ENCODE measurements at regions of chr10 and their contacts with region 1.

Region 1: GRCh38 chr10:84537447-84537931 is 209.1 kb downstream of the CCSER2 start:
- DNase-seq: peak in 3 of 5 donors; percentile 6 to 50 (median 45)
- H3K4me3 ChIP-seq: no peak overlapping the region
- H3K4me3 Mint-ChIP-seq: peak overlapping the region in 1 of 7 donors; percentile 64
- H3K27ac ChIP-seq: no peak overlapping the region
- H3K27ac Mint-ChIP-seq: no peak overlapping the region
- H3K4me1 ChIP-seq: no peaks in the 10 kb centered on the region
- H3K4me1 Mint-ChIP-seq: peaks cover 10 to 15% (median 12%) of the 10 kb centered on the region in 3 donors
- H3K27me3 ChIP-seq: no peaks in the 10 kb centered on the region
- H3K27me3 Mint-ChIP-seq: peaks cover 19 to 33% of the 10 kb centered on the region in 2 donors

Region 2: GRCh38 chr10:83965473-83965872 is 572.0 kb before region 1 on chr10:
- CTCF ChIA-PET with region 1: no interaction called
- POLR2A ChIA-PET with region 1: no interaction called
- DNase-seq: no peak
- H3K4me3 ChIP-seq: no peak overlapping the region
- H3K4me3 Mint-ChIP-seq: no peak overlapping the region
- H3K27ac ChIP-seq: no peak overlapping the region
- H3K27ac Mint-ChIP-seq: no peak overlapping the region
- H3K4me1 ChIP-seq: no peaks in the 10 kb centered on the region
- H3K4me1 Mint-ChIP-seq: no peaks in the 10 kb centered on the region
- H3K27me3 ChIP-seq: no peaks in the 10 kb centered on the region
- H3K27me3 Mint-ChIP-seq: peaks cover 1 to 3% of the 10 kb centered on the region in 2 donors

Region 3: DNA sequence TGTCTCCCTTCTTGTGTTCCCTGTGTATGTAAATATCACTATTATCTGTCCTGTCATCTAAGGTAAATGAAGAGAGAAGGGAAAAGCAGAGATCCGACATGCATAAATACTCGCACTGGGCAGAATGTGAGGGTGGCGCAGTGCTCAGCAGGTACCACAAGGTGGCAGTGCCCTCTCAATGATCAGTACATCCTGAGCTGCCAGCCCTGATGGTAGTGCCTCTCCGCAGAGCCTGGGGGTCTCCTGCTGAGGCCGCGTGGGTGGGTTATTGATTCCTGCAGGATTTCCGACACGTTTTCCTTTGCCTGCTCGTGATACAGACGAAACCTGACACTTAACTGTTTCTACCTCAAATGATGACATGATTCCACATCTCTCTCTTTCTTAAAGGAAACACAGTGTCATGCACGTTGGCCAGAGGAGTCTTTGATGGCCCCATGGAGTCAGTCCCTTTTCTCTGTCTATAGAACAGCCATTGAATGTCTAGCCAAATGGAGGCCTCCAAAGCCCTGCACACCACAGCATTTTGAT is 272.8 kb before region 1 on chr10:
- CTCF ChIA-PET with region 1: interaction called, 191 read pairs
- POLR2A ChIA-PET with region 1: no interaction called
- DNase-seq: peak; percentile 48 to 76 (median 58)
- H3K4me3 ChIP-seq: no peak overlapping the region
- H3K4me3 Mint-ChIP-seq: no peak overlapping the region
- H3K27ac ChIP-seq: no peak overlapping the region
- H3K27ac Mint-ChIP-seq: no peak overlapping the region
- H3K4me1 ChIP-seq: no peaks in the 10 kb centered on the region
- H3K4me1 Mint-ChIP-seq: peaks cover 5 to 13% (median 9%) of the 10 kb centered on the region in 3 donors
- H3K27me3 ChIP-seq: peaks cover 5% of the 10 kb centered on the region
- H3K27me3 Mint-ChIP-seq: peaks cover 9 to 39% of the 10 kb centered on the region in 2 donors

Region 4: GRCh38 chr10:84352251-84352842 is 185.1 kb before region 1 on chr10:
- CTCF ChIA-PET with region 1: interaction called, 24 read pairs
- POLR2A ChIA-PET with region 1: no interaction called
- DNase-seq: peak; percentile 52 to 83 (median 59)
- H3K4me3 ChIP-seq: no peak overlapping the region
- H3K4me3 Mint-ChIP-seq: peak overlapping the region in 3 of 7 donors; percentile 7 to 37 (median 14)
- H3K27ac ChIP-seq: no peak overlapping the region
- H3K27ac Mint-ChIP-seq: peak overlapping the region in 6 of 8 donors; percentile 22 to 75 (median 46)
- H3K4me1 ChIP-seq: peaks cover 53% of the 10 kb centered on the region
- H3K4me1 Mint-ChIP-seq: peaks cover 63 to 87% (median 84%) of the 10 kb centered on the region in 3 donors
- H3K27me3 ChIP-seq: no peaks in the 10 kb centered on the region
- H3K27me3 Mint-ChIP-seq: no peaks in the 10 kb centered on the region

Region 5: GRCh38 chr10:84429926-84430520 is 107.5 kb before region 1 on chr10:
- CTCF ChIA-PET with region 1: interaction called, 10 read pairs
- POLR2A ChIA-PET with region 1: no interaction called
- DNase-seq: peak; percentile 33 to 75 (median 54)
- H3K4me3 ChIP-seq: no peak overlapping the region
- H3K4me3 Mint-ChIP-seq: no peak overlapping the region
- H3K27ac ChIP-seq: no peak overlapping the region
- H3K27ac Mint-ChIP-seq: peak overlapping the region in 4 of 8 donors; percentile 0 to 53 (median 38)
- H3K4me1 ChIP-seq: peaks cover 12% of the 10 kb centered on the region
- H3K4me1 Mint-ChIP-seq: peaks cover 50 to 75% (median 68%) of the 10 kb centered on the region in 3 donors
- H3K27me3 ChIP-seq: no peaks in the 10 kb centered on the region
- H3K27me3 Mint-ChIP-seq: no peaks in the 10 kb centered on the region

Region 6: DNA sequence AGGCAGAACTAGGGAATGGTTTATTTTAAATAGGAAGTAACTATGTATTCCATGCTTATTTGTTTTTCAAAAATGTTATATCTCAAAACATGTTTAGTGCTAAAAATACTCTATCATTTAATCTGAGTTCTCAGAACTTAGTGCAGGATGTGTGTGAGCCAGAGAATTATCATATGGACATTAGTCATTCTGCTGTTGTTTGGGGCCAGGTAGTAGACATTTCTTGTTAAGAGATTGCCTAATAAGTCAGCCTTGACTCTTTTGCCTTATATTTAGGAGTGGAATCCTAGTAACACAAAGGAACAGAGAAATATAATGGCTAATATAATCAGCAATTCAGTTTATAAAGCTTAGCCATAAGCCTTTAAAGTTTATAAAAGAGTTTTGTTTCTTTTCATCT is 59.3 kb before region 1 on chr10:
- CTCF ChIA-PET with region 1: no interaction called
- POLR2A ChIA-PET with region 1: no interaction called
- DNase-seq: no peak
- H3K4me3 ChIP-seq: no peak overlapping the region
- H3K4me3 Mint-ChIP-seq: no peak overlapping the region
- H3K27ac ChIP-seq: no peak overlapping the region
- H3K27ac Mint-ChIP-seq: no peak overlapping the region
- H3K4me1 ChIP-seq: no peaks in the 10 kb centered on the region
- H3K4me1 Mint-ChIP-seq: peaks cover 14 to 17% (median 15%) of the 10 kb centered on the region in 3 donors
- H3K27me3 ChIP-seq: no peaks in the 10 kb centered on the region
- H3K27me3 Mint-ChIP-seq: peaks cover 0 to 1% of the 10 kb centered on the region in 2 donors

Region 7: DNA sequence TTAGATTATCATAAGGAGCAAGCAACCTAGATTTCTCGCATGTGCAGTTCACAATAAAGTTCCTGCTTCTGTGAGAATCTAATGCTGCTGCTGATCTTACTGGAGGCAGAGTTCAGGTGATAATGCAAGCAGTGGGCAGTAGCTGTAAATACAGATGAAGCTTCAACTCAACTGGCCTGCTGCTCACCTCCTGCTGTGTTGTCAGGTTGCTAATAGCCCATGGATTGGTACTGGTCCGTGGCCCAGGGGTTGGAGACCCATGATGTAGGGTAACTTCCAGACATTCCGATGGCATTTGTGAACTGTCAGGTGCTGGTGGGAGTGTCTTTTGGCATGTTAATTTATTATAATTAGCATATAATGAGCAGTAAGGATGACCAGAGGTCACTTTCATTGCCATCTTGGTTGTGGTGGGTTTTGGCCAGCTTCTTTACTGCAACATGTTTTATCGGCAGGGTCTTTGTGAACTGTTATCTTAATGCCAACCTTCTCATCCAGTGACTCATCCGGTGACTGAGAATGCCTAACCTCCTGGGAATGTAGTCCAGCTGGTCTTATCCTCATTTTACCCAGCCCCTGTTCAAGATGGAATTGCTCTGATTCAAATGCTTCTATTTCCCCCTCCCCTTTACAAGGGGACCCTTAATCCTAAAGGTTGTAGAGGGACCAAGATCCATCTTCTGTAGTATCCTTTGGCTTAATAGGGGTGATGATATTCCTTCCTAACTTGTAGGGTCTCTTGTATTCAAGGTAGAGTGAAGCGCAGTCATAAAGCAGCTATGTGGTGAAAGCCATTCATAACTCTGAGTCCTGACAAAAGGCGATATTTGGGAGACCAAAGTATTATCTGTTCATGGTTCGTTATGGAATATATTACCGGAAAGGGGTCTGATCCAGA is 43.3 kb before region 1 on chr10:
- CTCF ChIA-PET with region 1: no interaction called
- POLR2A ChIA-PET with region 1: no interaction called
- DNase-seq: no peak
- H3K4me3 ChIP-seq: no peak overlapping the region
- H3K4me3 Mint-ChIP-seq: no peak overlapping the region
- H3K27ac ChIP-seq: no peak overlapping the region
- H3K27ac Mint-ChIP-seq: peak overlapping the region in 3 of 8 donors; percentile 26 to 39 (median 37)
- H3K4me1 ChIP-seq: peaks cover 4% of the 10 kb centered on the region
- H3K4me1 Mint-ChIP-seq: peaks cover 44 to 78% (median 78%) of the 10 kb centered on the region in 3 donors
- H3K27me3 ChIP-seq: no peaks in the 10 kb centered on the region
- H3K27me3 Mint-ChIP-seq: no peaks in the 10 kb centered on the region

Region 8: GRCh38 chr10:86376852-86377796 is 1839.6 kb after region 1 on chr10:
- CTCF ChIA-PET with region 1: interaction called, 10 read pairs
- POLR2A ChIA-PET with region 1: no interaction called
- DNase-seq: peak; percentile 69 to 78 (median 72)
- H3K4me3 ChIP-seq: no peak overlapping the region
- H3K4me3 Mint-ChIP-seq: peak overlapping the region in 1 of 7 donors; percentile 13
- H3K27ac ChIP-seq: no peak overlapping the region
- H3K27ac Mint-ChIP-seq: no peak overlapping the region
- H3K4me1 ChIP-seq: no peaks in the 10 kb centered on the region
- H3K4me1 Mint-ChIP-seq: peaks cover 1 to 4% (median 3%) of the 10 kb centered on the region in 3 donors
- H3K27me3 ChIP-seq: peaks cover 3% of the 10 kb centered on the region
- H3K27me3 Mint-ChIP-seq: peaks cover 31 to 59% of the 10 kb centered on the region in 2 donors